ENCODE measurements at regions of chr6 and their contacts with region 1.

Region 1: DNA sequence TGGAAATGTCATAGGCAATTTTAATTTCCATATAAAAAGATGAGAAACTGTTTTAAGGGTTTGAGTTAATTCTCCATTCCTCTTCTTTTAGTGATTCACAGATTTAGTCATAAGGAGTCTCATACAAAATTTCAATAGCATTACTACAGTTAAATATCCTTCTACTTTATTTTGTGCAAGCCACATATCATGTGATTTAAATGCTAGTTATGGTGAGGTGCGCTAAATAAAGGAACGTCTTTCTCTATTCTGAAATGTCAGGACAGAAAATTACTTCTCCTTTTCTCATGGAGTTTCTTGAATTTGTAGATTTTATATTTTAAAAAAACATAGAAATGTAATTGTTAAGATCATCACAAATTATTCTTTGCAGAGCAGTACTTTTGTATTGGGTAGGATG is 50.0 kb upstream of the SUPT3H start:
- DNase-seq: no peak
- ATAC-seq: no peak
- H3K4me3 ChIP-seq: no peak overlapping the region
- H3K27ac ChIP-seq: no peak overlapping the region
- H3K4me1 ChIP-seq: peaks cover 13 to 14% of the 10 kb centered on the region in 2 experiments; a peak in 3 of 5 replicates
- H3K27me3 ChIP-seq: no peaks in the 10 kb centered on the region
- CTCF ChIP-seq: no peak
- EP300 ChIP-seq: no peak
- POLR2A ChIP-seq: no peak
- RAD21 ChIP-seq: no peak

Region 2: GRCh38 chr6:45495429-45496084 is 67.8 kb after region 1 on chr6:
- CTCF ChIA-PET with region 1: no interaction called
- POLR2A ChIA-PET with region 1: no interaction called
- in situ Hi-C with region 1: no loop called
- intact Hi-C with region 1: loop called (anchors 5 kb)
- DNase-seq: peak in 1 of 4 experiments; percentile 30
- ATAC-seq: no peak; the same call in 1 of the 3 replicates
- H3K4me3 ChIP-seq: no peak overlapping the region
- H3K27ac ChIP-seq: no peak overlapping the region
- H3K4me1 ChIP-seq: no peaks in the 10 kb centered on the region; a peak in 1 of 5 replicates
- H3K27me3 ChIP-seq: no peaks in the 10 kb centered on the region
- CTCF ChIP-seq: no peak
- EP300 ChIP-seq: no peak
- POLR2A ChIP-seq: no peak
- RAD21 ChIP-seq: no peak